ENCODE measurements at regions of chr6 and their contacts with region 1.

Region 1: GRCh38 chr6:158332237-158332636 is 20.0 kb downstream of the TULP4 start:
- DNase-seq: no peak
- H3K4me3 ChIP-seq: no peak overlapping the region
- H3K27ac ChIP-seq: no peak overlapping the region
- H3K4me1 ChIP-seq: no peaks in the 10 kb centered on the region
- H3K27me3 ChIP-seq: no peaks in the 10 kb centered on the region
- CTCF ChIP-seq: no peak

Region 2: DNA sequence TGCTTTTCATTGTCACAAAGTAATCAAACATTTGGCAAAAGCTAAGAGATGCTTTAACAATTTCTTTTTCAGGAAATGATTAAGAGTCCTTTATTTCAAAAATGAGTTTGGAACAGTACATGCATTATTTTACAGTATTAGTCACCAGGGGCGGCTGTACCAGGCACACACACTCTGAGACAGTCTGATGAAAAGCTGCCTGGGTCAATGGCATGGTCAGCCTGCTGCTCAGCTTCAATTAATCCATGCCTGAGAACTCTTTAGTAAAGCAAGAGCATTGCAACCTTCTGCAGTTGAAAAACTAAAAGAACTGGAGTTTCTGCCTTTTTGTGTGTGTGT is 85.5 kb after region 1 on chr6:
- CTCF ChIA-PET with region 1: no interaction called
- dilution Hi-C with region 1: loop called (anchors 5 kb)
- in situ Hi-C with region 1: no loop called
- intact Hi-C with region 1: no loop called
- DNase-seq: peak; percentile 71
- H3K4me3 ChIP-seq: no peak overlapping the region
- H3K27ac ChIP-seq: peak overlapping the region; percentile 57
- H3K4me1 ChIP-seq: peaks cover 39% of the 10 kb centered on the region
- H3K27me3 ChIP-seq: no peaks in the 10 kb centered on the region
- CTCF ChIP-seq: no peak